GM10248 (cell line): ENCODE measurements at regions of chr7 and their contacts with region 1.

Region 1: GRCh38 chr7:139075031-139075652 is 34.4 kb downstream of the ZC3HAV1 start:
- DNase-seq: peak; percentile 76
- CTCF ChIP-seq: peak; percentile 70

Region 2: GRCh38 chr7:138865843-138866242 is 209.3 kb before region 1 on chr7:
- CTCF ChIA-PET with region 1: no interaction called
- POLR2A ChIA-PET with region 1: no interaction called
- DNase-seq: peak; percentile 51
- CTCF ChIP-seq: peak; percentile 47

Region 3: GRCh38 chr7:138886501-138886917 is 188.6 kb before region 1 on chr7:
- CTCF ChIA-PET with region 1: interaction called, 25 read pairs
- POLR2A ChIA-PET with region 1: no interaction called
- DNase-seq: peak; percentile 76
- CTCF ChIP-seq: peak; percentile 55

Region 4: DNA sequence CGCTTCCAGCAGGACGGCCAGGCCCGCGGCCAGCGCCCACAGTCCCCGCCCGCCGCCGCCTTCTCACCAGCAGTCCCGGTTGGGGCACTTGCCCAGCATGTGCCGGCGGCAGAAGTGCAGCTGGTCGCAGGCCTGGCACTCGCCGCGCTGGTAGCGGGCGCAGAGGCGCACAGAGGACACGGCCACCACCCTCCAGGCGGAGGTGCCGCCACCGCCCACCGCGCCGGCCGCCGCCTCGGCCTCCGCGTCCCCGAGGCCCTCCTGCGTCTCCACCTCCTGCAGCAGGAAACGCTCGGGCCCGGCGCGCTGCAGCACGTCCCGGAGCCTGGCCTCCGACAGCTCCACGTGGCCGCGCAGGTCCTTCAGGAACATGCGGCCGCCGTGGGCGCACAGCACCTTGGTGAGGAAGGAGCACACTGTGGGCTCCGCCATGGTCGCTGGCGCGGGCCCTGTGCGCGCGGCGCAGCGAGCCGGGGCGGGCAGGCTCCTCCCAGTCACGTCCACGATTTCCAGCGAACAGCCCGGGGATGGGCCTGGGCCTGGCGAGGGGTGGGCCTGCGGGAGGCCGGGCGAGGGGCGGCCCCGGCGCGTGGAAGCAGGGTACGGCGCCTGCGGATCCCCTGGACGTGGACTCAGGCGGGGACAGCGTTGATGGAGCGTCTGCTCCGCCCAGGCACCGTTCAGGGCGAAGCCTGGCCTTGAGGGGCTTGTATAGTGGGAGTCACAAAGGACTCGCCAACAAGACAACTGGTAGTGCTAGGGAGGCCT is 39.4 kb before region 1 on chr7 and contains the start of gene ZC3HAV1L:
- CTCF ChIA-PET with region 1: interaction called, 25 read pairs
- POLR2A ChIA-PET with region 1: no interaction called
- DNase-seq: peak; percentile 88
- CTCF ChIP-seq: no peak

Region 5: DNA sequence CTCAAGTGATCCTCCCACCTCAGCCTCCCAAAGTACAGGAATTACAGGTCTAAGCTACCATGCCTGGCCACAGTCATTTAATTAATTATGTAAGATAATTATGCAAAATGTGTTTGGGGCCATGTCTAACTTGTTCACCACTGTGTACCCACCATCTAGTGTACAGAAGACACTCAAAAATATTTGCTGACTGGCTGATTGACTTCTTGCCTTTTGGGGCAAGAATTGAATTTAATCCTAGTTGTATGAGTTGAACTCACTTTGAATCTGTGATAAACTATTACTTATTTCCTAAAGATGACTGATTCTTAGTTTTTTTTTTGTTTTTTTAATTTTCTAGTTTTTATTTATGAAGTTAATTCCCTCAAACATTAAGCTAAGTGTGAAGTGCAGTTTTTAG is 23.5 kb before region 1 on chr7:
- CTCF ChIA-PET with region 1: interaction called, 17 read pairs
- POLR2A ChIA-PET with region 1: no interaction called
- DNase-seq: no peak
- CTCF ChIP-seq: no peak

Region 6: GRCh38 chr7:139086454-139086853 is 11.3 kb after region 1 on chr7:
- CTCF ChIA-PET with region 1: interaction called, 70 read pairs
- POLR2A ChIA-PET with region 1: no interaction called
- DNase-seq: no peak
- CTCF ChIP-seq: no peak

Region 7: DNA sequence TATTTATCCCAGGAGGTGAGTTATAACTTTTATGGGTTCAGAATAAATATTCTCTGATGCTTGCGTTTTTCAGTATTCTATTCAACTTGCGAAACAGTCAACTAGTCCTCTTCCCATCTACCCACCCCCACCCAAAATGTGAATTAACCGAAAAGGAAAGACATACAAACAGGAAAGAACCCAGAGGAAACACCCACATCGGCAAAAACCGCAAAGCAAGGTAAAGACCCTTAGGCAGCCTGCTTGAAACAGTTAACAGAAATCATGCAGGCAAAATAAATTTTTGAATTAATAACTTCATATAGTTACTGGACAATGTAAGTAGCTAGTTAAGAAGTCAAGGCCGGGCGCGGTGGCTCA is 28.9 kb after region 1 on chr7:
- CTCF ChIA-PET with region 1: interaction called, 20 read pairs
- POLR2A ChIA-PET with region 1: no interaction called
- DNase-seq: no peak
- CTCF ChIP-seq: no peak